PC-3 (cell line): ENCODE measurements at regions of chr21 and their contacts with region 1.

Region 1: GRCh38 chr21:30044445-30045064 is 104.8 kb upstream of the GRIK1 start:
- DNase-seq: peak; percentile 70
- ATAC-seq: no peak
- H3K4me3 ChIP-seq: no peak overlapping the region
- H3K27ac ChIP-seq: no peak overlapping the region
- H3K4me1 ChIP-seq: no peaks in the 10 kb centered on the region
- H3K27me3 ChIP-seq: peaks cover 9% of the 10 kb centered on the region; the same call in 1 of the 2 replicates
- CTCF ChIP-seq: peak; percentile 90

Region 2: DNA sequence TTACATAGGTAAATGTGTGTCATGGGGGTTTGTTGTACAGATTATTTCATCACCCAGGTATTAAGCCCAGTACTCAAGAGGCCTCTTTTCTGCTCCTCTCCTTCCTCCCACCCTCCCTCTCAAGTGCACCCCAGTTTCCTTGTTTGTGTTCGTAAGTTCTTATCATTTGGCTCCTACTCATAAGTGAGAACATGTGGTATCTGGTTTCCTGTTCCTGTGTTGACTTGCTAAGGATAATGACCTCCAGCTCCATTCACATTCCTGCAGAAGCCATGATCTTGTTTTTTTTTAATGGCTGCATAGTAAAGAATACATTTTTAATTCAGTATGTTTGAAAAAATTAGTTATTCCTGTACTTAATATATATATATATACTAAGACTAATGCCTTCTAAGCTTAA is 14.4 kb after region 1 on chr21:
- CTCF ChIA-PET with region 1: no interaction called
- POLR2A ChIA-PET with region 1: no interaction called
- intact Hi-C with region 1: no loop called
- DNase-seq: no peak
- ATAC-seq: no peak
- H3K4me3 ChIP-seq: no peak overlapping the region
- H3K27ac ChIP-seq: no peak overlapping the region
- H3K4me1 ChIP-seq: no peaks in the 10 kb centered on the region
- H3K27me3 ChIP-seq: peaks cover 33% of the 10 kb centered on the region
- CTCF ChIP-seq: no peak

Region 3: GRCh38 chr21:30194701-30195299 is 150.2 kb after region 1 on chr21:
- CTCF ChIA-PET with region 1: no interaction called
- POLR2A ChIA-PET with region 1: no interaction called
- intact Hi-C with region 1: loop called (anchors 10 kb)
- DNase-seq: peak; percentile 76
- ATAC-seq: peak; percentile 38; the same call in 1 of the 2 replicates
- H3K4me3 ChIP-seq: no peak overlapping the region
- H3K27ac ChIP-seq: no peak overlapping the region
- H3K4me1 ChIP-seq: no peaks in the 10 kb centered on the region
- H3K27me3 ChIP-seq: peaks cover 60% of the 10 kb centered on the region
- CTCF ChIP-seq: peak; percentile 87

Region 4: DNA sequence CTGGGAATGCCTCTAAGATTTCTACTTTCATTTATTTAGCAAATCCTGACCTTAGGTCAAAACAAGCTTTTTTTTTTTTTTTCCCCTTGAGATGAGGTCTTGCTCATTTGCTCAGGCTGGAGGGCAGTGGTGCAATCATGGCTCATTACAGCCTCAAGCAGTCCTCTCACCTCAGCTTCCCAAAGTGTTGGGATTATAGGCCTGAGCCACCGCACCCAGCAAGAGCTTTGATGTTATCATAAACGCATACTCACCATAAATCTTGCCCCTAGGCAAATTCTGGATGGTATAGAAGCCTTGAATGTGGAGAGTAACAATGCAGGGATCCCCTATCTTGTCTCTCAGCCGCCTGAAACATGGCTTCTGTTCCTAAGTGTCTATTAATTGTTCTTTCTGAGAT is 196.1 kb after region 1 on chr21:
- CTCF ChIA-PET with region 1: no interaction called
- POLR2A ChIA-PET with region 1: no interaction called
- intact Hi-C with region 1: no loop called
- DNase-seq: no peak
- ATAC-seq: no peak
- H3K4me3 ChIP-seq: no peak overlapping the region
- H3K27ac ChIP-seq: no peak overlapping the region
- H3K4me1 ChIP-seq: peaks cover 2% of the 10 kb centered on the region
- H3K27me3 ChIP-seq: 0 out of 2 replicates have a peak, but pooled peaks cover 7% of the 10 kb centered on the region
- CTCF ChIP-seq: no peak

Region 5: DNA sequence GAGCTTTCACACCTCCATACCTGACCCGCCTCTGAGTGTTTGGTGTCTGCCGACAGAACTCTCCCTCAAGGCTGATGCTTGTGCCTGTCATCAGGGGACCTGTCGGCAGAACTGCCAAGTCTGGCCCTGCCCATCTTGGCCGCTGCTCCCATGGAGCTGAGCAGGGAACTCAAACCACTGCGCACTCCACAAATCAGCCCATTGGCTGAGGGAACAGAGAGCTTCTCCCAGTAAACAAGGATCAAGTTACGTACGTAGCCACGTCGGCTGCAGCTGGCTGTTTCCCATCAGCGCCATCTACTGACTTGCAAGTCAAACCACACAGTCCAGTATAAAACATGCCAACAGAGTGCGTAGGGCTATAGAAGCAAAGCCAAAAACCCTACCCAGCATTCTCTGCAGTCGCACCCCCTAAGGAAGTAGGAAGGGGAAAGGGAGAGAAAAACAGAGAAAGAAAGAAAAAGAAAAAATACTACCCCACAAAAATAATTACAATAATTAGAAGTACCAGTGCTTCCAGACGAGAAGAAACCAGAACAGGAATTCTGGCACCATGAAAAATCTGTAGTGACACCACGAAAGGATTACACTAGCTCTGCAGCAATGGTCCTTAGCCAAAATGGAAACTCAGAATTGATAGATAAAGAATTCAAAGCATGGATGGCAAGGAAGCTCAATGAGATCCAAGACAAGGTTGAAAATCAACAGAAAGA is 364.4 kb after region 1 on chr21:
- CTCF ChIA-PET with region 1: no interaction called
- POLR2A ChIA-PET with region 1: no interaction called
- intact Hi-C with region 1: loop called (anchors 2 kb)
- DNase-seq: peak; percentile 93
- ATAC-seq: peak; percentile 100
- H3K4me3 ChIP-seq: 0 out of 2 replicates have a peak overlapping the region, but pooled peaks have one; percentile 3
- H3K27ac ChIP-seq: no peak overlapping the region
- H3K4me1 ChIP-seq: no peaks in the 10 kb centered on the region
- H3K27me3 ChIP-seq: peaks cover 19% of the 10 kb centered on the region; the same call in 1 of the 2 replicates
- CTCF ChIP-seq: peak; percentile 83